H1 (cell line): ENCODE measurements at regions of chr4 and their contacts with region 1.

Region 1: GRCh38 chr4:98467627-98468072 is 190.8 kb downstream of the TSPAN5 start:
- DNase-seq: peak; percentile 69 to 70
- H3K4me3 ChIP-seq: peak overlapping the region; percentile 19 to 56 (median 42); a peak in 7 of 8 replicates
- H3K27ac ChIP-seq: no peak overlapping the region
- H3K4me1 ChIP-seq: peaks cover 0 to 8% (median under 1%) of the 10 kb centered on the region in 4 experiments; a peak in 4 of 7 replicates
- H3K27me3 ChIP-seq: no peaks in the 10 kb centered on the region
- CTCF ChIP-seq: peak; percentile 60 to 89 (median 80)
- EP300 ChIP-seq: no peak
- POLR2A ChIP-seq: no peak
- RAD21 ChIP-seq: peak; percentile 92 to 94

Region 2: DNA sequence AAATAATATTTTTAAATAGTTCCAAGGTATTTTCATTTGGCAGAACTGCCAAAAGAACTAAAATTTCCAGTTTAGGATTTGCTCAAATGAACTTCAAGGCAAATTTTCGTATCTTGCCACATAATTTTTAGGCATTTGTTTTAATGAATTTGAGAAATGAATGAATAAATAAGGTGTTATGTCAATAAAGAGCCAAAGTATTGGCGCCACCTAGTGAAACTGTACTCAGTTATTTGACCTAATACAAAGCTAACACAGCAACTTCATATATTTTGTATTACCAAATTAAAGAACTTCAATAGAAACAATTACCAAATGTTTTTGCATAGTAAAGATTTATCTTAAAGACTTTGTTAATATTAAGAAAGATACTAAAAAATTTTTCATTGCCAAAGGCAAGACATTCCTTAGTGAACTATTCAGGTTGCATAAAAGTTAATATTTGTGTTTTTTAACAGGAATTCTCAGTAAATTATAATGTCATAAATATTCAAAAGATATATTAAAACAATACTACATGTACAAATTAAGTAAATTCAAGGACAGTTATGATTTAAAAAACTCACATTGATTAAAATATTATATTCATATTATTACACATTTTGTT is 374.7 kb before region 1 on chr4:
- CTCF ChIA-PET with region 1: no interaction called
- POLR2A ChIA-PET with region 1: no interaction called
- DNase-seq: no peak
- H3K4me3 ChIP-seq: no peak overlapping the region
- H3K27ac ChIP-seq: no peak overlapping the region
- H3K4me1 ChIP-seq: no peaks in the 10 kb centered on the region
- H3K27me3 ChIP-seq: no peaks in the 10 kb centered on the region
- CTCF ChIP-seq: peak in 2 of 3 experiments; percentile 34 to 44; a peak in 2 of 4 replicates
- EP300 ChIP-seq: no peak
- POLR2A ChIP-seq: no peak
- RAD21 ChIP-seq: peak in 1 of 2 experiments; percentile 48; a peak in 3 of 4 replicates

Region 3: DNA sequence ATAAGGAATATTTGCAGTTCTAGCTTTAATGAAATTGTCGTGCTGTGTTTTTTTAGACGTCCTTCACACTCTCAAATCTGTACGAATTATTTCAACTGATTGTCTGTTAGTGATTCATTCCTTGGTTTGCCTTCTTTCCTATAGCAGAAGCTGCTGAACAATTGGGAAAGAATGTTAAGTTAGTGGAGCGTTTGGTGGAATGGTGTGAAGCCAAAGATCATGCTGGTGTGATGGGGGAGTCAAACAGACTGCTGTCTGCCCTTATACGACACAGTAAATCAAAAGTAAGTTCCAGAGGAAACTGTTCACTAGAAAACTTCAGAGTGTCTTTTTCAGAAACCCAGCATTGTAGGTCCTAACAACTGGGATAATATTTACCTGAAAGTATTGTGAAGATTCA is 46.5 kb before region 1 on chr4:
- CTCF ChIA-PET with region 1: no interaction called
- POLR2A ChIA-PET with region 1: no interaction called
- DNase-seq: no peak
- H3K4me3 ChIP-seq: no peak overlapping the region
- H3K27ac ChIP-seq: no peak overlapping the region
- H3K4me1 ChIP-seq: no peaks in the 10 kb centered on the region
- H3K27me3 ChIP-seq: no peaks in the 10 kb centered on the region
- CTCF ChIP-seq: no peak
- EP300 ChIP-seq: no peak
- POLR2A ChIP-seq: no peak
- RAD21 ChIP-seq: no peak

Region 4: DNA sequence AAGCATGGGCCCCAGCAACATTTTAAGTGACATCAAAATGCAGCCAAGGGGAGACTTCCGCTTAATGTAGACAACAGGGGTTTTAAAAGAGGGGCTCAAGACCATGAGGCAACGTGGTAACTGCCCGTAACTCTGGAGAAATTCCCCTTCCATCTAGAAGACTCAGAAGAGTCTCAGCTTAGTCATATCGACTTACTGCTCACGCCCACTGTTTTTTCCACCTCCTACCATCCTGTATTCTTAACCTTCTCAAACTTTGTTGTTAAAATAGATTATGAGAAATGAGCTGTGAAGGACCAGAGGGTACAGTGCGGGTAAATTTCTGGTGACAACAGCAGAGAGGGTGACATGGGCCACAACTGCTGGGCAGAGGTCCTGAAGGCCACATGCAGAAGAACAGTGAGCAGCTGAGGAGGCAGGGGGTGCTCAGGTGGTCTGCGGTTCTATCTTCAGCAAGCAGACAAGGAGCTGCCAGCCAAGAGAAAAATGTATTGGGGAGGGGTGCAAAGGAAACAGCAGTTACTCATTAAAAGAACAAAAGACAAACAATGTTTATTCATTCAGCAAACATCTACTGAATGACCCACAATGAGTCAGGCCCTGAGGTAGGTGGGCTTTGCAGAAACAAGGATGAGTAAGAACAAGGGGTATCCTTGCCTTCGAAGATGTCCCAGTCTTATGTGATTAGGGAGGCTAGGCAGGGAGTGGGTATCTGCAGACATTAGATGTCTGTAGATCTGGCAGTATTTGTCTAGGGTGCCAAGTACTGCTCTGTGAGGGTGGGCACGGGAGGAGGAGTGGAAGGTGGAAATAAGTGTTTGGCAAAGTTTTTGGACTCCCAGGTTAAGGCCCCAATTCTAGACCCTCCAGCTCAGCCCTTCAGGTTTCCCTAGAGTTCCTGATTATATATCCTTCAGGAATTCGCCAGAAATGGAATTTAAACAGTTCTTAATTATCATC is 15.5 kb after region 1 on chr4:
- CTCF ChIA-PET with region 1: interaction called, 13 read pairs
- POLR2A ChIA-PET with region 1: interaction called, 3 read pairs
- DNase-seq: no peak
- H3K4me3 ChIP-seq: no peak overlapping the region
- H3K27ac ChIP-seq: no peak overlapping the region
- H3K4me1 ChIP-seq: peaks cover 0 to 15% (median 8%) of the 10 kb centered on the region in 4 experiments; a peak in 4 of 7 replicates
- H3K27me3 ChIP-seq: no peaks in the 10 kb centered on the region
- CTCF ChIP-seq: no peak
- EP300 ChIP-seq: no peak
- POLR2A ChIP-seq: no peak
- RAD21 ChIP-seq: no peak

Region 5: DNA sequence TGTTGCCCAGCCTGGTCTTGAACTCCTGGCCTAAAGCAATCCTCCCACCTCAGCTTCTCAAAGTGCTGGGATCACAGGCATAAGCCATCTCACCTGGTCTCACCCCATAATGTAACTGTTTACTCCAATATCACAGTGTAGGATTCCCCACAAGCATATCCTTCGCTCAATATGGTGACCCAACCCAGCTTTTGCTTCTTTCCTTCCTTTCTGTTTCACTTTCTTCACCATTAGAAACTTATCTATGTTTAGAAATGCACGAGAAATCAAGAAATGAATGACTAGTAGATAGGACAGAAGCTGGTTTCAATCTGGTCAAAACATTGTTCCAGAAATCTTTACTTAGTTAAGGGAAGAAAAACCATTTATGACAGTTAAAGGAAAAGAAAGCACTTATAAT is 171.9 kb after region 1 on chr4:
- CTCF ChIA-PET with region 1: interaction called, 13 read pairs
- POLR2A ChIA-PET with region 1: no interaction called
- DNase-seq: no peak
- H3K4me3 ChIP-seq: no peak overlapping the region
- H3K27ac ChIP-seq: no peak overlapping the region
- H3K4me1 ChIP-seq: no peaks in the 10 kb centered on the region; a peak in 1 of 7 replicates
- H3K27me3 ChIP-seq: no peaks in the 10 kb centered on the region
- CTCF ChIP-seq: no peak
- EP300 ChIP-seq: no peak
- POLR2A ChIP-seq: no peak
- RAD21 ChIP-seq: no peak

Region 6: DNA sequence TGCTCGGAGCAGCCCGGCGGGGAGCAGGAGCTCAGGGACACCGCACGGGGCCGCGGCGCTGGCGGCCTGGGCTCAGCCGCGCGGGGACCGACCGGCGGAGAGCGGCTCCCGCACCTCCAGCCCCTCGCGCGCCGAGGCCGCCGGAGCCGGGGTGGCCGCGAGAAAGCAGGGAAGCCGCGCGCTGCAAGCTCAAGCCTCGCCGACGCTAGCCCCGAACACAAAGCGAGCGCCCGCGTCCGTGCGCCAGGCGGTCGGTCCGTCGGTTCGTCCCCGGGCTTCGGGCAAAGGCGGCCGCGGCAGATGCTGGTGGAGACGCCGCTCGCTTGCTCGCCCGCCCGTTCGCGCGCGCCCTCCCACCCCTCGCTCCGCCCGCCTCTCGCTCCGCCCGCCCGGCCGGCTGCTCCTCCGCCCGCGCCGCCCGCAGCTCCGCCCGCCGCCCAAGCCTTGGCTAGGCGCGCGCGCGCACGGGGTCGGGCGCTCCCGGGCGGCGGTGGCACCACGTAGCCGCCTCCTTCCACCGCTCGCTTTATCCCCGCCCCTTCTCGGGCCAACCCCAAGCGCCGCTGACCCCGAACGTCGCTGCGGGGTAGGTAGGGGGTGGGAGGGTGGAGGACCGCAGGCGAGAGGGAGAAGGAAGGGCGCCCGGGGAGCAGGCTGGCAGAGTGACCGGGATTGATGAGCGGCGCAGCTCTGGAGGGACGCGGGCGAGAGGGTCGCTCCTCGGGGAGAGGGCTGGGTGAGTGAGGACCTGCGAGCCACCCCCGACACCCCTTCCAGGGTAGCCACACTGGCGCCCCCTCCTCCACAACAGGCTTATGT is 190.8 kb after region 1 on chr4 and contains the start of gene TSPAN5:
- CTCF ChIA-PET with region 1: interaction called, 11 read pairs
- POLR2A ChIA-PET with region 1: interaction called, 3 read pairs
- DNase-seq: peak in 1 of 2 experiments; percentile 82
- H3K4me3 ChIP-seq: peak within 1 kb of the TSS; percentile 79 to 96 (median 82)
- H3K27ac ChIP-seq: no peak within 1 kb of the TSS
- H3K4me1 ChIP-seq: peaks cover 6 to 21% (median 15%) of the 10 kb centered on the region in 4 experiments; a peak in 6 of 7 replicates
- H3K27me3 ChIP-seq: peaks cover 3 to 21% (median 7%) of the 10 kb centered on the region in 4 experiments; a peak in 4 of 7 replicates
- CTCF ChIP-seq: no peak
- EP300 ChIP-seq: no peak
- POLR2A ChIP-seq: no peak
- RAD21 ChIP-seq: peak in 1 of 2 experiments; percentile 20; a peak in 1 of 4 replicates
- total RNA-seq, gene TSPAN5: 20.9 and 21.2 TPM in 2 replicates